Naive thymus-derived CD4-positive, alpha-beta T cell (primary cell): ENCODE measurements at regions of chr1 and their contacts with region 1.

Region 1: DNA sequence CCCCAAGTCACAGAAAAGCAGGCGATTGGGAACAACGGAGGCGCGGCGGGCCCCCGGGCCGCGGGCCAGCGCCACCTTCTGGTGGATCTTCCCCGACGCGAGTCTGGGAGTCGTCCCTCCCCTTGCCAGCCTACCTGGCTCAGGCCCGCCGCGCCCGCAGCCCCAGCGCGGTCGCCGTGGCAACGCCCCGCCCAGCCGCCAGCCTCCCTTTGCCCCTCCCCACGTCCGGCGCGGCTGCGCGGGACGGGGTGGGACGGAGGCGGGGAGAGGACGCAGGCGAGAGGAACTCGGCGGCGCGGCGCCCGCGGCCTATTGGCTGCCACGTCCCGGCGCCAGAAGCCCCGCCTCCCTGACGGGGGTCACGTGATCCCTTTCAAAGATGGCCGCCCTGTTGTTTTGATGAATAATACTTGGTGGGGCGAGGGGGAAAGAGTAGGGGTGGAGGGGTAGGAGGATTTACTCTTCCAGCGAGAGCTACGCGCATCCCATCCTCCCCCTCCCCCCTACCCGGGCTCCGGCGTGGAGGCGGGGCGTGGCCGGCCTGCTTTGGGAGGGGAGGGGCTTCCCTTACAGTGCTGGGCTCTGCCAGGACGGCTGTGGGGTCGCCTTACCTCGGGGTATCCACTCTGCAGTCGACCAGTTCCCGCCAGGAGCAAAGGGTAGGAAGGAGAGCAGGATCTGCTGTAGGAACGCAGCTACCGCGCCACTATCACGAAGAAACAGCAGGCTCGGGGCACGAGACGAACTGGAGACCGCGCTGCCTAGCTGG is at the start of gene UBE4B:
- DNase-seq: peak; percentile 98 to 100 (median 99)
- ATAC-seq: peak; percentile 97
- H3K4me3 ChIP-seq: peak within 1 kb of the TSS; percentile 96
- H3K4me3 Mint-ChIP-seq: peak within 1 kb of the TSS; percentile 79 to 98 (median 96)
- H3K27ac ChIP-seq: peak within 1 kb of the TSS; percentile 94
- H3K27ac Mint-ChIP-seq: peak within 1 kb of the TSS; percentile 91 to 98 (median 97)
- H3K4me1 ChIP-seq: peaks cover 14 to 15% of the 10 kb centered on the region in 2 donors
- H3K4me1 Mint-ChIP-seq: peaks cover 20 to 34% (median 28%) of the 10 kb centered on the region in 7 donors
- H3K27me3 ChIP-seq: no peaks in the 10 kb centered on the region
- H3K27me3 Mint-ChIP-seq: no peaks in the 10 kb centered on the region
- total RNA-seq, gene UBE4B: 37.9 to 48.3 (median 39.3) TPM

Region 2: DNA sequence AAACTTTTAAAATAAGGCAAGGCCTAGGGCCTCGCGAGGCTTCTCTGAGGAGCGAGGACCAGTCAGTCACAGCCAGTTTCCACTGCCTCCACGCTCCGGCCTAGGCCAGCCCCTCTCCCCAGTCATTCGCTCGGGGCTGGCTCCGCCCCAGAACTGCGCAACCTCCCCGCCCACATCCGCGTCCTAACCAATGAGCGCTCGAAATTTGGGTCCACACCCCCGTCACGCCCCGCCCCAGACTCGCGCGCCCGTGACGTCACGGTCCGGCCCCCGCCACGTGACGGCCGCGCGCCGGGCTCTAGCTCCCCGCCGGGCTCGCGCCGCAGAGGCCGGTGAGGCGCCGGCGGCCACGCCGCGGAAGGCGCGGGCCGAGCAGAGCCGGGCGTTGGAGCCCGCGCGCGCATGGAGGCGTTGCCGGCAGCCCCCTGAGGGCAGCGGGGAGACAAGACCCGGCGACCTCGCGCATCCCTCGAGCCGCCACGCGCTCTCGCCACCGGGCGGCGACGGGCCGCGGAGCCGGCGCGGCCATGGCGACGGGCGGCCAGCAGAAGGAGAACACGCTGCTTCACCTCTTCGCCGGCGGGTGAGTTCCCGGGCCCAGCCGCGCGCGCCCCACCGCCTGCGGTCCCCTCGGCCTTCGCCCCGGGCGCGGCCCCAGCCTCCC is 493.5 kb before region 1 on chr1 and contains the start of gene SLC25A33:
- CTCF ChIA-PET with region 1: no interaction called
- POLR2A ChIA-PET with region 1: no interaction called
- intact Hi-C with region 1: loop called in 1 of 2 experiments (anchors 2 kb)
- DNase-seq: peak; percentile 92 to 99 (median 95)
- ATAC-seq: peak; percentile 99
- H3K4me3 ChIP-seq: peak within 1 kb of the TSS; percentile 58
- H3K4me3 Mint-ChIP-seq: peak within 1 kb of the TSS; percentile 86 to 93 (median 90)
- H3K27ac ChIP-seq: peak within 1 kb of the TSS; percentile 73
- H3K27ac Mint-ChIP-seq: peak within 1 kb of the TSS; percentile 85 to 97 (median 91)
- H3K4me1 ChIP-seq: peaks cover 5 to 8% of the 10 kb centered on the region in 2 donors
- H3K4me1 Mint-ChIP-seq: peaks cover 18 to 38% (median 31%) of the 10 kb centered on the region in 7 donors
- H3K27me3 ChIP-seq: no peaks in the 10 kb centered on the region
- H3K27me3 Mint-ChIP-seq: no peaks in the 10 kb centered on the region
- total RNA-seq, gene SLC25A33: 2.5 to 5.8 (median 3.9) TPM

Region 3: GRCh38 chr1:9784508-9785133 is 248.2 kb before region 1 on chr1:
- CTCF ChIA-PET with region 1: no interaction called
- POLR2A ChIA-PET with region 1: no interaction called
- intact Hi-C with region 1: loop called (anchors 1 to 10 kb)
- DNase-seq: peak; percentile 29 to 78 (median 71)
- ATAC-seq: peak; percentile 65
- H3K4me3 ChIP-seq: no peak overlapping the region
- H3K4me3 Mint-ChIP-seq: peak overlapping the region in 2 of 10 donors; percentile 28 to 38
- H3K27ac ChIP-seq: no peak overlapping the region
- H3K27ac Mint-ChIP-seq: peak overlapping the region in 5 of 9 donors; percentile 23 to 76 (median 49)
- H3K4me1 ChIP-seq: peaks cover 11 to 17% of the 10 kb centered on the region in 2 donors
- H3K4me1 Mint-ChIP-seq: peaks cover 11 to 41% (median 32%) of the 10 kb centered on the region in 7 donors
- H3K27me3 ChIP-seq: no peaks in the 10 kb centered on the region
- H3K27me3 Mint-ChIP-seq: no peaks in the 10 kb centered on the region

Region 4: GRCh38 chr1:9942939-9943788 is 89.6 kb before region 1 on chr1 and contains the starts of genes LZIC and NMNAT1:
- CTCF ChIA-PET with region 1: interaction called, 3 read pairs
- POLR2A ChIA-PET with region 1: interaction called, 3 read pairs
- intact Hi-C with region 1: loop called (anchors 1 to 2 kb)
- DNase-seq: peak; percentile 71 to 92 (median 82)
- ATAC-seq: peak; percentile 98
- H3K4me3 ChIP-seq: peak within 1 kb of the TSS; percentile 71
- H3K4me3 Mint-ChIP-seq: peak within 1 kb of the TSS; percentile 91 to 98 (median 97)
- H3K27ac ChIP-seq: peak within 1 kb of the TSS; percentile 92
- H3K27ac Mint-ChIP-seq: peak within 1 kb of the TSS; percentile 93 to 99 (median 97)
- H3K4me1 ChIP-seq: peaks cover 0 to 9% of the 10 kb centered on the region in 2 donors
- H3K4me1 Mint-ChIP-seq: peaks cover 17 to 33% (median 26%) of the 10 kb centered on the region in 7 donors
- H3K27me3 ChIP-seq: no peaks in the 10 kb centered on the region
- H3K27me3 Mint-ChIP-seq: no peaks in the 10 kb centered on the region
- total RNA-seq, gene LZIC: 18.0 to 35.1 (median 31.0) TPM
- total RNA-seq, gene NMNAT1: 2.7 to 8.3 (median 7.5) TPM

Region 5: DNA sequence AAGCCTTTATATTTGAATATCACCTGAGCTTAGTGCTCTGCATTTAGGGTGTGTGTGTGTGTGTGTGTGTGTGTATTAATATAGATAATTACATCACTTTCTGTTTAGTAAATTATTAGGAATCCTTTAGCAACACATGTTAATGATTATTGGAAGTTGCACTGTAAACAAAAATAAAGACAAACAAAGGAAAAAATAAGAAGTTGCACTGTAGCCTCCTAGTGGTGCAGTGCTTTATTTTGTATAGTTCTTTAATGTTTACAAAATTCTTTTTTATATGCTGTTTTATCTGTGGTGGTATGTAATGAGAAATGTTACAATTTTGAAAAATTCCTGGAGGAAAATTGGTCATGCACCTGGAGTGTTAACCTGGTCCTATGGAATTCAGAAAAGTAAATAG is 69.2 kb after region 1 on chr1:
- CTCF ChIA-PET with region 1: no interaction called
- POLR2A ChIA-PET with region 1: no interaction called
- intact Hi-C with region 1: no loop called
- DNase-seq: no peak
- ATAC-seq: no peak
- H3K4me3 ChIP-seq: no peak overlapping the region
- H3K4me3 Mint-ChIP-seq: no peak overlapping the region
- H3K27ac ChIP-seq: no peak overlapping the region
- H3K27ac Mint-ChIP-seq: peak overlapping the region in 1 of 9 donors; percentile 59
- H3K4me1 ChIP-seq: no peaks in the 10 kb centered on the region
- H3K4me1 Mint-ChIP-seq: peaks cover 0 to 2% (median 0%) of the 10 kb centered on the region in 7 donors
- H3K27me3 ChIP-seq: no peaks in the 10 kb centered on the region
- H3K27me3 Mint-ChIP-seq: no peaks in the 10 kb centered on the region

Region 6: GRCh38 chr1:10430216-10431069 is 397.7 kb after region 1 on chr1 and contains the start of gene CENPS:
- CTCF ChIA-PET with region 1: no interaction called
- POLR2A ChIA-PET with region 1: no interaction called
- intact Hi-C with region 1: loop called (anchors 1 to 2 kb)
- DNase-seq: peak; percentile 68 to 96 (median 91)
- ATAC-seq: peak; percentile 93
- H3K4me3 ChIP-seq: peak within 1 kb of the TSS; percentile 97
- H3K4me3 Mint-ChIP-seq: peak within 1 kb of the TSS; percentile 82 to 98 (median 88)
- H3K27ac ChIP-seq: peak within 1 kb of the TSS; percentile 88
- H3K27ac Mint-ChIP-seq: peak within 1 kb of the TSS; percentile 66 to 96 (median 92)
- H3K4me1 ChIP-seq: peaks cover 3 to 8% of the 10 kb centered on the region in 2 donors
- H3K4me1 Mint-ChIP-seq: peaks cover 0 to 26% (median 20%) of the 10 kb centered on the region in 7 donors
- H3K27me3 ChIP-seq: no peaks in the 10 kb centered on the region
- H3K27me3 Mint-ChIP-seq: peaks cover 0 to 2% (median 0%) of the 10 kb centered on the region in 5 donors
- total RNA-seq, gene CENPS: 5.4 to 13.0 (median 9.8) TPM

Region 7: DNA sequence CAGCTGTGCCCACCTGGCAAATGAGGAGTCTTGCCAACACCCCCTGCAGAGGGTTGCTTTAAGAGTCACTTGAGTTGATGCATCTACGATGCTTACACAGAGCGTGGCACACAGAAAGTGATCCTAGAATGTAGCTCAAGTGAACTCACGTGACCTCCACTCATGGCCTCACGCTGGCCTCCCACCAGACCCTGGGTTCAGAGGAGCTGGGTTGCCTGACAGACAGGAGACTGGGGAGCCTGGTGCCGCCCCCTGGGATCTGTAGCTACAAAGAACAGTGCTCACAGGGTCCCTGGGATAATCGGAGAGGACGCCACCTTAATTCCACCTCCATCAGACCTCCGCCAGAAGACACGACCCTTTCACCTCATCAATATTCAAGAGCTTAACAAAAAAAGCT is 845.1 kb after region 1 on chr1:
- CTCF ChIA-PET with region 1: no interaction called
- POLR2A ChIA-PET with region 1: no interaction called
- intact Hi-C with region 1: no loop called
- DNase-seq: no peak
- ATAC-seq: no peak
- H3K4me3 ChIP-seq: no peak overlapping the region
- H3K4me3 Mint-ChIP-seq: no peak overlapping the region
- H3K27ac ChIP-seq: no peak overlapping the region
- H3K27ac Mint-ChIP-seq: no peak overlapping the region
- H3K4me1 ChIP-seq: no peaks in the 10 kb centered on the region
- H3K4me1 Mint-ChIP-seq: no peaks in the 10 kb centered on the region
- H3K27me3 ChIP-seq: no peaks in the 10 kb centered on the region
- H3K27me3 Mint-ChIP-seq: peaks cover 0 to 10% (median 8%) of the 10 kb centered on the region in 5 donors

Region 8: DNA sequence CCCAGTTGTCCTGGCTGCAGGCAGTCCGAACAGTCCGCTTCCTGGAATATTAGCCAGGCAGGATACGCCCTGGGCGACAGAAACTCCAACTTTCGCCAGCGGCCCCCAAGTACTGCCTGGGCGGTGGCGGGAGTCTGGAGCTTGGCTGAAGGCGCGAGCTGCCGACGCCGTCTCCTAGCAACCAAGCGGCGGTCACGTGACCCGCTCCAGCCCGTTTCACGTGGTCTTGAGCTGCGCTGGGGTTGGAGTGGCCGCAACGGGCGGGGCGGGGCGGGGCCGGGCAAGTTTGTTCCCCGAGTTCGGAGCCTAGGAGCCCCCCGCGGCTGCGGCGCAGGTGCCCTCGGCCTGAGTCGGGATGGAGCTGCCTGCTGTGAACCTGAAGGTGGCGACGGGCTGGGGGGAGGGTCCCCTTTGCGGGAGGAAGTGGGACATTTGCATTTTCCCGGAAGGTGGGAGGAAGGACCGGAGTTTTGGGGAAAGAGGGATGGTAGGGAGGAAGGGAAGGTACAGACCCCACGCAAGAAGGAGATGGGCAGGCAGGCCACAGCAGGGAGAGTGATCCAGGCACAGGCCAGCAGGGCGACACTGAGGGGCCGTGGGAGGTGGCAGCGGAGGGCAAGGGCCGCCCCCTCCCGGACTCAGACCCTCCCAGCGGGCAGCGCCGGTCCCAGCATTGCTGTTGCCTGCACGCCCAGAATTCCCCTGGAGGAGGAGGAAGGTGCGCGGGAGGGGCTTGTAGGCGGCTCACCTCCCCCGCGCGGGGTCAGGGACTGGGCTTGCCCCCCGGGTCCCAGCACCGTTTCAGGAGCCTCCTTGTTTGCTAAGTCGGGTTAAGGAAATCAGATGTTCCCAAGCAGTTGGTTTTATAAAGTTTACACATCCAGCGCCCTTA is 1703.3 kb after region 1 on chr1 and contains the start of gene AGTRAP:
- CTCF ChIA-PET with region 1: no interaction called
- POLR2A ChIA-PET with region 1: no interaction called
- intact Hi-C with region 1: loop called in 1 of 2 experiments (anchors 10 kb)
- DNase-seq: peak; percentile 62 to 84 (median 71)
- ATAC-seq: peak; percentile 78
- H3K4me3 ChIP-seq: peak within 1 kb of the TSS; percentile 92
- H3K4me3 Mint-ChIP-seq: peak within 1 kb of the TSS; percentile 84 to 96 (median 92)
- H3K27ac ChIP-seq: peak within 1 kb of the TSS; percentile 79
- H3K27ac Mint-ChIP-seq: peak within 1 kb of the TSS; percentile 3 to 95 (median 83)
- H3K4me1 ChIP-seq: peaks cover 38 to 52% of the 10 kb centered on the region in 2 donors
- H3K4me1 Mint-ChIP-seq: peaks cover 51 to 80% (median 76%) of the 10 kb centered on the region in 7 donors
- H3K27me3 ChIP-seq: no peaks in the 10 kb centered on the region
- H3K27me3 Mint-ChIP-seq: no peaks in the 10 kb centered on the region
- total RNA-seq, gene AGTRAP: 28.2 to 82.5 (median 32.7) TPM